ENCODE measurements at regions of chr2 and their contacts with region 1.

Region 1: GRCh38 chr2:86079981-86080911 is 25.4 kb downstream of the POLR1A start:
- DNase-seq: peak; percentile 95
- H3K4me3 Mint-ChIP-seq: no peak overlapping the region
- H3K27ac Mint-ChIP-seq: peak overlapping the region; percentile 70
- H3K4me1 Mint-ChIP-seq: peaks cover 41% of the 10 kb centered on the region
- H3K27me3 Mint-ChIP-seq: no peaks in the 10 kb centered on the region

Region 2: DNA sequence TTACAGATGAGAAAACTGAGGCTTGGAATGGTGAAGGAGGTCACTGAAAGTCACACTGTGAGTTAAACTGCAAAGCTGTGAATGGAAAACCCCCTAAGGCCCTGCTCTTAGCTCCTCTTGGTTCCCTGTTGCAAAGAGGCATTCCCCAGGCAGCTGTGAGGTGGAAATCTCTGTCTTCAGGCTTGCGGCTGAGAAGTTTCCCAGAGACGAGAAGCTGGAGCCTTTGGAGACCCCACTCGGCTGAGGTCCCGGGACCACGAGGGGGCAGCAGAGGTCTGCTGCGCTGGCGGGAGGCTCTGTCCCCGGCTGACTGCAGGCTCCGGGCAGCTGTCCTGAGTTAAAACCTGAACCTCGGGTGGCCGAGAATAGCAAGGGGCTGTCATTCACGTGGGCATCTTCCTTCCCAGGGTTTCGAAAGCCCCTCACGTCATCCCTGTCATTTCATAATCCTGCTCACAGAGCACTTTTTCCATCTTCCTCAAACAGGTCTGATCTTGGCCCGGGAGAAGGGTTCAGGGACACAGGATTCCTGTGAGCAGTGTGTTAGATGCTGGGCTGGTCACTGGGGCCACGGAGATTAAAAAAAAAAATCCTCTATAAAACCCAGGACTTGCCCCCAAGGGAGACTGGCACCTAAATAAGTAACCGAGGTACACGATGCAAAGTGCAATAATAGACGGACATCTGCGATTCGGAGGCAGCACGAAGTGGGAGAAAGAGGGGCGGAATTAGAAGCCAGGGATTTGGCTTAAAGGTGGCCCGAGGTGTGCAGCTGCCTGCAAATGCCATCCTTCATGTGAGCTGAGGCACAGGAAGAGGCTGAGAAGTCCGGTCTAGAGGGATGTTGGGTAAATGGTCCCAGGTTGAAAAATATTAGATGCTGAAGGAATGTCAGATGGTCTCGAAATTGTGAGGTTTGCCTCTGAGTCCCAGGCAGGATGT is 351.1 kb before region 1 on chr2:
- intact Hi-C with region 1: loop called (anchors 5 kb)
- DNase-seq: peak; percentile 93
- H3K4me3 Mint-ChIP-seq: no peak overlapping the region
- H3K27ac Mint-ChIP-seq: no peak overlapping the region
- H3K4me1 Mint-ChIP-seq: peaks cover 3% of the 10 kb centered on the region
- H3K27me3 Mint-ChIP-seq: peaks cover 32% of the 10 kb centered on the region

Region 3: GRCh38 chr2:85826990-85827878 is 253.0 kb before region 1 on chr2:
- intact Hi-C with region 1: loop called (anchors 1 kb)
- DNase-seq: peak; percentile 95
- H3K4me3 Mint-ChIP-seq: peak overlapping the region; percentile 5
- H3K27ac Mint-ChIP-seq: no peak overlapping the region
- H3K4me1 Mint-ChIP-seq: peaks cover 31% of the 10 kb centered on the region
- H3K27me3 Mint-ChIP-seq: peaks cover 23% of the 10 kb centered on the region

Region 4: DNA sequence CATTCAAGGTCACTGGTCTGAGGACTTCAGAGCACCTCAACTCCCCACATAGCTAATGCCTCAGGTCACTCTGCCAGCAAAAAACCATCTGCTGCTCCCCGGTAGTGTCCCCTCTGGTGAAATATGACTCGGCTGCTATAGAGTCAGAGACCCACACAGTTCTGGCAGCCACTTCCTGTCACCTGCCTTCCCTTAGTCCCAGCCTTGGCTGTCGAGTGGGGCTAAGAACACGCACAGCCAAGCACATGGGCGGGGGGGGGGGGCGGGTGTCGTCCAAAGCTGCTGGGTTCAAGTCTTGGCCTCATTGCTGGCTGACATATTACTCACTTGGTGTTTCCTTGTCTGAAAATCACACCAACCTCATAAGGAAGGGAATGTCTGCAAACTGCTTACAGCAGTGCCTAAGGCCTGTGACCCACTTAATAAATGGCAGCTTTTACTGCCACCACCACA is 12.1 kb before region 1 on chr2:
- intact Hi-C with region 1: no loop called
- DNase-seq: peak; percentile 82
- H3K4me3 Mint-ChIP-seq: peak overlapping the region; percentile 24
- H3K27ac Mint-ChIP-seq: peak overlapping the region; percentile 20
- H3K4me1 Mint-ChIP-seq: peaks cover 27% of the 10 kb centered on the region
- H3K27me3 Mint-ChIP-seq: no peaks in the 10 kb centered on the region

Region 5: DNA sequence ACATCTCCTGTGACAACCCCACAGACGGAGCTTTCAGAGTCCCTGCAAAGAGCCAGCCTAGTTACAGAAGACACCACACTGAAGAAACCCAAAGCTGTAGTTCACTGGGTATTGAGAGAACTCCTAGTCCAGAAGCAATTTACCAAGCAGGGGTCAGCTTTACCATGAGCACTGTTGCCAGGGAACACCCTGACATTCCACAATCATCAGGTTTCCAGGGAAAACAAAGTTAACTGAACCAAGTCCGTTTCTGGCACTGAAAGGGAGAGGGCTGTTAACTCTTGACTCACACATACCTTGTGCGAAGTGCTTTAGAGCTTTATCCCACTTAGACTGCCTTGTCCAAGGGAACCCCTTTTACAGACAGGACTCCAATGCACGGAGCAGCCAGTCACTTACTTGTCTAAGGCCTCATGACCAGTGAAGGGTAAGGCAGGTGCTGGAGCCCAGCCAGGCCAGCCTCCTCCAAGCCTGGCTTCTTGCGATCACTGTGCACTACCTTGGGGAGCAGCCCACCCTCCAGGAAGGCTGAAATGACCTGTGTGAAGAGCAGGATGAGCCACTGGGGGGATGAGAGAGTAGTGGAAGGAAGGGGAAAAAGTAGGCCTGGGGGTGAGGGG is 203.3 kb after region 1 on chr2:
- intact Hi-C with region 1: no loop called
- DNase-seq: no peak
- H3K4me3 Mint-ChIP-seq: no peak overlapping the region
- H3K27ac Mint-ChIP-seq: no peak overlapping the region
- H3K4me1 Mint-ChIP-seq: no peaks in the 10 kb centered on the region
- H3K27me3 Mint-ChIP-seq: peaks cover 10% of the 10 kb centered on the region

Measured in activated CD4-positive, alpha-beta T cell treated with anti-CD3 and anti-CD28 coated beads, Interleukin-2, amount 10 ng/mL, durations not matched to agents 24 days and 14 days (primary cell).